ENCODE measurements at regions of chr16 and their contacts with region 1.

Region 1: GRCh38 chr16:2867987-2868789 is 10.2 kb upstream of the PRSS22 start:
- DNase-seq: peak; percentile 91 to 98 (median 95)
- ATAC-seq: peak; percentile 98
- H3K4me3 ChIP-seq: peak overlapping the region; percentile 77
- H3K4me3 Mint-ChIP-seq: peak overlapping the region; percentile 83
- H3K27ac ChIP-seq: peak overlapping the region; percentile 52 to 85
- H3K27ac Mint-ChIP-seq: peak overlapping the region; percentile 87
- H3K4me1 ChIP-seq: peaks cover 10% of the 10 kb centered on the region
- H3K4me1 Mint-ChIP-seq: peaks cover 18% of the 10 kb centered on the region
- H3K27me3 ChIP-seq: no peaks in the 10 kb centered on the region
- H3K27me3 Mint-ChIP-seq: no peaks in the 10 kb centered on the region
- CTCF ChIP-seq: peak; percentile 92

Region 2: DNA sequence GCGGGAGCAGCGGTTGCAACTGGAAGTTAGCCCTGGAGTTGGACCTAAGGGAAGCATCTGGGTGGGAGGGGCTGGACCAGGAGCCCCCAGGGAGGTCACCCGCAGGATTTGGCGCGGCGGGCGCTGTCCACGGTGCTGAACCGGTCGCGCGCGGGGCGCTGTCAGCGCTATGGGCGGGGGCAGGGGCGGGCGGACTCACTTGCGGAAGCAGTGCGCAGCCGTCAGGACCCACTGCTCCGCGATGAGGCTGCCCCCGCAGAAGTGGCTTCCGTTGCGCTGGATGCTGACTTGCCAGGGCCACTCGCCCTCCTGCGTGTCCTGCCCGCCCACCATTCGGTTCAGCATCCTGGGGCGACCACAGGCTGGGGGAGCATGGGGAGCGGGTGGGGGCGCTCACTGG is 152.7 kb before region 1 on chr16:
- CTCF ChIA-PET with region 1: no interaction called
- POLR2A ChIA-PET with region 1: no interaction called
- intact Hi-C with region 1: loop called (anchors 2 to 10 kb)
- DNase-seq: peak; percentile 70 to 90 (median 87)
- ATAC-seq: peak; percentile 99
- H3K4me3 ChIP-seq: peak overlapping the region; percentile 8 to 33
- H3K4me3 Mint-ChIP-seq: peak overlapping the region; percentile 5
- H3K27ac ChIP-seq: no peak overlapping the region
- H3K27ac Mint-ChIP-seq: no peak overlapping the region
- H3K4me1 ChIP-seq: peaks cover 5% of the 10 kb centered on the region
- H3K4me1 Mint-ChIP-seq: peaks cover 3% of the 10 kb centered on the region
- H3K27me3 ChIP-seq: no peaks in the 10 kb centered on the region
- H3K27me3 Mint-ChIP-seq: no peaks in the 10 kb centered on the region
- CTCF ChIP-seq: no peak

Region 3: GRCh38 chr16:2777231-2777902 is 90.8 kb before region 1 on chr16 and contains the start of gene ELOB:
- CTCF ChIA-PET with region 1: interaction called, 5 read pairs
- POLR2A ChIA-PET with region 1: no interaction called
- intact Hi-C with region 1: loop called in 1 of 2 experiments (anchors 5 kb)
- DNase-seq: peak; percentile 78 to 94 (median 88)
- ATAC-seq: peak; percentile 90
- H3K4me3 ChIP-seq: peak within 1 kb of the TSS; percentile 84 to 92
- H3K4me3 Mint-ChIP-seq: peak within 1 kb of the TSS; percentile 95
- H3K27ac ChIP-seq: peak within 1 kb of the TSS; percentile 96 to 99
- H3K27ac Mint-ChIP-seq: peak within 1 kb of the TSS; percentile 98
- H3K4me1 ChIP-seq: peaks cover 30% of the 10 kb centered on the region
- H3K4me1 Mint-ChIP-seq: peaks cover 50% of the 10 kb centered on the region
- H3K27me3 ChIP-seq: no peaks in the 10 kb centered on the region
- H3K27me3 Mint-ChIP-seq: no peaks in the 10 kb centered on the region
- CTCF ChIP-seq: no peak
- total RNA-seq, gene ELOB: 70.3 to 71.5 TPM

Region 4: GRCh38 chr16:2883027-2883851 is 15.1 kb after region 1 on chr16 and contains the start of gene FLYWCH2:
- CTCF ChIA-PET with region 1: interaction called, 14 read pairs
- POLR2A ChIA-PET with region 1: interaction called, 11 read pairs
- intact Hi-C with region 1: no loop called
- DNase-seq: peak; percentile 98 to 100 (median 99)
- ATAC-seq: peak; percentile 83
- H3K4me3 ChIP-seq: peak within 1 kb of the TSS; percentile 69 to 78
- H3K4me3 Mint-ChIP-seq: peak within 1 kb of the TSS; percentile 87
- H3K27ac ChIP-seq: peak within 1 kb of the TSS; percentile 90 to 94
- H3K27ac Mint-ChIP-seq: peak within 1 kb of the TSS; percentile 95
- H3K4me1 ChIP-seq: peaks cover 9% of the 10 kb centered on the region
- H3K4me1 Mint-ChIP-seq: peaks cover 17% of the 10 kb centered on the region
- H3K27me3 ChIP-seq: no peaks in the 10 kb centered on the region
- H3K27me3 Mint-ChIP-seq: no peaks in the 10 kb centered on the region
- CTCF ChIP-seq: no peak
- total RNA-seq, gene FLYWCH2: 9.3 to 10.9 TPM

Region 5: GRCh38 chr16:2911580-2912329 is 43.6 kb after region 1 on chr16 and contains the start of gene FLYWCH1:
- CTCF ChIA-PET with region 1: interaction called, 20 read pairs
- POLR2A ChIA-PET with region 1: no interaction called
- intact Hi-C with region 1: loop called in 1 of 2 experiments (anchors 1 kb)
- DNase-seq: peak; percentile 95 to 100 (median 99)
- ATAC-seq: peak; percentile 99
- H3K4me3 ChIP-seq: peak within 1 kb of the TSS; percentile 64 to 66
- H3K4me3 Mint-ChIP-seq: peak within 1 kb of the TSS; percentile 94
- H3K27ac ChIP-seq: peak within 1 kb of the TSS; percentile 59 to 71
- H3K27ac Mint-ChIP-seq: peak within 1 kb of the TSS; percentile 87
- H3K4me1 ChIP-seq: peaks cover 12% of the 10 kb centered on the region
- H3K4me1 Mint-ChIP-seq: peaks cover 21% of the 10 kb centered on the region
- H3K27me3 ChIP-seq: peaks cover 0 to 2% of the 10 kb centered on the region in 2 experiments
- H3K27me3 Mint-ChIP-seq: no peaks in the 10 kb centered on the region
- CTCF ChIP-seq: no peak
- total RNA-seq, gene FLYWCH1: 89.1 to 92.6 TPM

Region 6: DNA sequence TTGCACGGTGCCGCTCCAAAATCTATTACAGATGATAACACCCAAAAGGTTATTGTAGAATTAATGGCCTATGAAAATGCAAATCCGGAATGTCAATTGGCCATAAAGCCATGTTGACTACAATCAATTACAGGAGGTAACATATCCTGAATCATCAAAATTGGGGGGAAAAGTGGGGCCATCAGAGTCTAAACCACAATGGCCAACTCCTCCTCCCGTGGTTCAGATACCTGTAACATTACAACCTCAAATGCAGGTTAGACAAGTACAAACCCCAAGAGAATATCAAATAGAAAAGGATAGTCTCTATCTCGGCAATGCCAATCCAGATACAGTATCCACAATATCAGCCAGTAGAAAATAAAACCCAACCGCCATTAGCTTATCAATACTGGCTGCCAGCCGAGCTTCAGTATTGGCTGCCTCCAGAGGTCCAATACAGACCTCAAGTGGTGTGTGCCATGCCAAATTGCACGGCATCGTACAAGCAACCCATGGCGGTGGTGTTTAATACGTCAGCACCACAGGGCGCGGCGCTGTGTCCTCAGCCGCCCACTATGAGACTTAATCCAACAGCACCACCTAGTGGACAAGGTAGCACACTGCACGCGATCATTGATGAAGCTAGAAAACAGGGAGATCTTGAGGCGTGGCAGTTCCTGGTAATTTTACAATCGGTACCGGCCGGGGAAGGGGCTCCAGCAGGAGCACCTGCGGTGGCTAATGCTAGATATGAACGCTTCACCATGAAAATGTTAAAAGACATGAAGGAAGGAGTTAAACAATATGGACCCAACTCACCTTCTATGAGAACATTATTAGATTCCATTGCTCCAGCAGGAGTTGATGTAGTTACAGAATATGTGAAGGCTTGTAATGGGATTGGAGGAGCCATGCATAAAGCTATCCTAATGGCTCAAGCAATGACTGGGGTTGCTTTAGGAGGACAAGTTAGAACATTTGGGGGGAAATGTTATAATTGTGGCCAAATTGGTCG is 58.8 kb after region 1 on chr16:
- CTCF ChIA-PET with region 1: interaction called, 14 read pairs
- POLR2A ChIA-PET with region 1: interaction called, 5 read pairs
- intact Hi-C with region 1: no loop called
- DNase-seq: peak; percentile 75 to 94 (median 88)
- ATAC-seq: peak; percentile 100
- H3K4me3 ChIP-seq: no peak overlapping the region
- H3K4me3 Mint-ChIP-seq: peak overlapping the region; percentile 6
- H3K27ac ChIP-seq: no peak overlapping the region
- H3K27ac Mint-ChIP-seq: no peak overlapping the region
- H3K4me1 ChIP-seq: peaks cover 4% of the 10 kb centered on the region
- H3K4me1 Mint-ChIP-seq: peaks cover 11% of the 10 kb centered on the region
- H3K27me3 ChIP-seq: no peaks in the 10 kb centered on the region
- H3K27me3 Mint-ChIP-seq: no peaks in the 10 kb centered on the region
- CTCF ChIP-seq: peak; percentile 93